ENCODE measurements at regions of chr5 and their contacts with region 1.

Region 1: GRCh38 chr5:132180134-132180745 is 47.4 kb downstream of the P4HA2 start:
- DNase-seq: peak in 4 of 9 donors; percentile 4 to 19 (median 6)
- ATAC-seq: peak; percentile 24
- H3K4me3 ChIP-seq: no peak overlapping the region
- H3K4me3 Mint-ChIP-seq: peak overlapping the region in 1 of 10 donors; percentile 23
- H3K27ac ChIP-seq: no peak overlapping the region
- H3K27ac Mint-ChIP-seq: peak overlapping the region in 1 of 9 donors; percentile 65
- H3K4me1 ChIP-seq: peaks cover 0 to 4% of the 10 kb centered on the region in 2 donors
- H3K4me1 Mint-ChIP-seq: peaks cover 16 to 40% (median 19%) of the 10 kb centered on the region in 7 donors
- H3K27me3 ChIP-seq: no peaks in the 10 kb centered on the region
- H3K27me3 Mint-ChIP-seq: peaks cover 0 to 4% (median 0%) of the 10 kb centered on the region in 5 donors

Region 2: GRCh38 chr5:132190161-132190817 is 10.0 kb after region 1 on chr5:
- CTCF ChIA-PET with region 1: no interaction called
- POLR2A ChIA-PET with region 1: no interaction called
- intact Hi-C with region 1: loop called in 1 of 2 experiments (anchors 1 kb)
- DNase-seq: peak in 7 of 9 donors; percentile 18 to 64 (median 44)
- ATAC-seq: peak; percentile 96
- H3K4me3 ChIP-seq: no peak overlapping the region
- H3K4me3 Mint-ChIP-seq: no peak overlapping the region
- H3K27ac ChIP-seq: no peak overlapping the region
- H3K27ac Mint-ChIP-seq: no peak overlapping the region
- H3K4me1 ChIP-seq: no peaks in the 10 kb centered on the region
- H3K4me1 Mint-ChIP-seq: peaks cover 0 to 4% (median 0%) of the 10 kb centered on the region in 7 donors
- H3K27me3 ChIP-seq: no peaks in the 10 kb centered on the region
- H3K27me3 Mint-ChIP-seq: peaks cover 0 to 19% (median 11%) of the 10 kb centered on the region in 5 donors

Region 3: GRCh38 chr5:132205385-132206125 is 25.3 kb after region 1 on chr5:
- CTCF ChIA-PET with region 1: no interaction called
- POLR2A ChIA-PET with region 1: no interaction called
- intact Hi-C with region 1: no loop called
- DNase-seq: peak in 1 of 9 donors; percentile 19
- ATAC-seq: no peak
- H3K4me3 ChIP-seq: no peak overlapping the region
- H3K4me3 Mint-ChIP-seq: no peak overlapping the region
- H3K27ac ChIP-seq: no peak overlapping the region
- H3K27ac Mint-ChIP-seq: no peak overlapping the region
- H3K4me1 ChIP-seq: no peaks in the 10 kb centered on the region
- H3K4me1 Mint-ChIP-seq: peaks cover 0 to 2% (median 0%) of the 10 kb centered on the region in 7 donors
- H3K27me3 ChIP-seq: no peaks in the 10 kb centered on the region
- H3K27me3 Mint-ChIP-seq: peaks cover 0 to 9% (median 0%) of the 10 kb centered on the region in 5 donors